Calu3 (cell line): ENCODE measurements at regions of chr2 and their contacts with region 1.

Region 1: GRCh38 chr2:122191341-122191740 is 435.9 kb downstream of the TSN start:
- DNase-seq: peak; percentile 70
- H3K4me3 Mint-ChIP-seq: no peak overlapping the region
- H3K27ac Mint-ChIP-seq: no peak overlapping the region
- H3K4me1 Mint-ChIP-seq: no peaks in the 10 kb centered on the region
- H3K27me3 Mint-ChIP-seq: peaks cover 49% of the 10 kb centered on the region
- CTCF ChIP-seq: peak; percentile 60

Region 2: GRCh38 chr2:121992700-121993099 is 198.6 kb before region 1 on chr2:
- CTCF ChIA-PET with region 1: no interaction called
- intact Hi-C with region 1: no loop called
- DNase-seq: no peak
- H3K4me3 Mint-ChIP-seq: no peak overlapping the region
- H3K27ac Mint-ChIP-seq: no peak overlapping the region
- H3K4me1 Mint-ChIP-seq: no peaks in the 10 kb centered on the region
- H3K27me3 Mint-ChIP-seq: peaks cover 83% of the 10 kb centered on the region
- CTCF ChIP-seq: no peak

Region 3: DNA sequence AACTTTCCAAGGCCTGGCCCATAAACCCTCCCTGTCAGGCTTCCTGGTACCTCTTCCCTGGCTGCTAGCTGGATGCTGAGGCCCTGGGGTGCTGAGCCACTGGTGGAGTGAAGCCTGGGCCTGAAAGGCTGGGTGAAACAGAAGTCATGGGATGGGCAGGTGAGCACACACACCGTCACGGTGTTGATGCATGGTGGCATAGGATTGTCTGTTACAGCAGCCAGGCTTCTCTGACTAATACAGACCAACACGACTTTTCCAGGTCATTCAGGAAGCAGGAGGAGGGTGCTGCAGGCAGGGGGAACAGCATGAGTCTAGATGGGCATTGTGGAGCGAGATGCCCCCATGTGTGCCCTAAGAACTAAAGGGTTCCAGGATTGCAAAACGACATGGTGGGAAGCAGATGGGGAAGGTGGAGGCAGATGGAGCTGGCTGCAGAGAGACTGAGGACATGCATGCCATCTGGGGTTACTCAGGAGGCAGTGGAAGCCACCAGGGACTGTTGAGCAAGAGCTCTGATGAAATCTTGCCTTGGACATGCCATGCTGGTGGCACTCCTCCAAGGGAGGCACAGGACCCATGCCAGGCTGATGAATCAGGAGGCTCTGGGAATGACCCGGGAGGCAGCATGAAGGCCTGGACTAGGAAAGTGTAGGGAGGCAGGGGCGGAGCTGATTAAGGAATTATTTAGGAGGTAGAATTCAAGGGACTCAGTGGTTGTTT is 45.0 kb after region 1 on chr2:
- CTCF ChIA-PET with region 1: no interaction called
- intact Hi-C with region 1: no loop called
- DNase-seq: peak; percentile 91
- H3K4me3 Mint-ChIP-seq: peak overlapping the region; percentile 3
- H3K27ac Mint-ChIP-seq: peak overlapping the region; percentile 57
- H3K4me1 Mint-ChIP-seq: peaks cover 39% of the 10 kb centered on the region
- H3K27me3 Mint-ChIP-seq: peaks cover 40% of the 10 kb centered on the region
- CTCF ChIP-seq: no peak

Region 4: DNA sequence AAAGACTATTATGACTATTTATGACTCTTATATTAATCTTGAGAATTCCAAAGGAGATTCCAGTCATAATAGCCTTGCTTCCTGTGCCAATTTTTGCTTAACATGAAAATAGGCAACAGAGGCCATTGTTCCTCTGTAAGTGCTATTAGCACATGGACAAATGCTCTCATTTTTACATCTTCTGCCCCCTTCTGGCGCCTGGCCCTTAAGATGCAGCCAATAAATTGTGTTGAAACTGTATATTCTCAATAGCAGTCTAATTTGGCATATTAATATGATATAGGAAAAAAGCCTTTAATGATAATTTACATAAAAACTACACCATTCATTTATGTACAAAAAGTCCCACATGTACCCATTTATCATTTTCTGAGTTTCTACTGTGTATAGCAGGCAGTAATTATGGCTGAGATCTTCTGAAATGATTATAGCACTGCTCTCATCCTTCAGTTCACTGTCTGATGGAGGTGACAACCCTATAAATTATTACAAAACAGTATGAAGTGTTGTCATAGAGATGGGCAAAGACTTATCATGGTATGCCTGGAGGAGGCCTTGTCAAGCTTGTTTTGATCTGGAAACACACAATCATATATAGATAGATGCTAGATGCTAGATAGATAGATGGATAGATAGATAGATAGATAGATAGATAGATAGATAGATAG is 177.4 kb after region 1 on chr2:
- CTCF ChIA-PET with region 1: no interaction called
- intact Hi-C with region 1: loop called (anchors 2 kb)
- DNase-seq: peak; percentile 24
- H3K4me3 Mint-ChIP-seq: no peak overlapping the region
- H3K27ac Mint-ChIP-seq: no peak overlapping the region
- H3K4me1 Mint-ChIP-seq: no peaks in the 10 kb centered on the region
- H3K27me3 Mint-ChIP-seq: peaks cover 22% of the 10 kb centered on the region
- CTCF ChIP-seq: no peak

Region 5: DNA sequence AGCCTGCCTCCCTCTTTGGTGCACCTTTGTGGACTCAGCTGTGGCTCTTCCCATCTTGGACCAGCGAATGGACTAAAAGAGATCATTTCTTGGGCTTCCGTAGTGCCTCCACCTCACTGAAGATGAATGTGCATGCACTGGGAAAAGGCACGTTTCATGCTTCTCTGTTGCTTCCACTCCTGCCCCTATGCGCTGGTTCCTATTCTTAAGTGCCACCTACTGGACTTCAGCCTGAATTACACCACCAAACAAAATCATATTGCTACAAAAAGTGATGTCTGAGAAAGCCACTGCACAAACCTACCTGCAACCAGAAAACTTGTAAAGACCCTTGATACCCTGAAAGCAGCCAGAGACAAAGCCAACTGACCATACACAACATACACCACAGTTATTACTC is 259.7 kb after region 1 on chr2:
- CTCF ChIA-PET with region 1: interaction called, 11 read pairs
- intact Hi-C with region 1: loop called (anchors 1 kb)
- DNase-seq: no peak
- H3K4me3 Mint-ChIP-seq: no peak overlapping the region
- H3K27ac Mint-ChIP-seq: no peak overlapping the region
- H3K4me1 Mint-ChIP-seq: no peaks in the 10 kb centered on the region
- H3K27me3 Mint-ChIP-seq: no peaks in the 10 kb centered on the region
- CTCF ChIP-seq: peak; percentile 49